Activated naive CD4-positive, alpha-beta T cell treated with anti-CD3 and anti-CD28 coated beads for 36 hours (primary cell): ENCODE measurements at regions of chr5 and their contacts with region 1.

Region 1: GRCh38 chr5:137498736-137499505 is at the start of gene SPOCK1:
- DNase-seq: peak; percentile 54
- H3K4me3 Mint-ChIP-seq: no peak within 1 kb of the TSS
- H3K27ac Mint-ChIP-seq: no peak within 1 kb of the TSS
- H3K4me1 Mint-ChIP-seq: peaks cover 2% of the 10 kb centered on the region
- H3K27me3 Mint-ChIP-seq: peaks cover 13% of the 10 kb centered on the region
- total RNA-seq, gene SPOCK1: 0.42 TPM in 1 of 2 experiments, not detected in the other

Region 2: DNA sequence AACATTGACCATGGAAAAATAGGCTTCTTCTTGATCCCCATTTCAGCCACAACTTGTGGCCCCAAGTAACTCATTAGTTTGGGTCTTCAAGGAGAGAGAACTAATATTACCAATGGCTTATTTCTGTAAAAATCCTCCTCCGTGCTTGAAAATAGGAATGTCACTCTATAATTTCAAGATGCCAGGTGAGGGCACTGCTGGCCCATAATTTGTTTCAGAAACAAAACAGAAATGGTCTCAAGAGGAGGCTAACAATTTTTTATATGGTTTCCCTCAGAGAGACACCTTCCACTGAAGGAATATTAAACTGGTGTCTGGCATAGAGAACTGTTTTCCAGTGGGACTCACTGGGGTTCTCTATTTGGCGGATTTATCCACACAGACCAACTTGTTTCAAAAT is 696.5 kb before region 1 on chr5:
- CTCF ChIA-PET with region 1: no interaction called
- intact Hi-C with region 1: loop called (anchors 10 kb)
- DNase-seq: no peak
- H3K4me3 Mint-ChIP-seq: no peak overlapping the region
- H3K27ac Mint-ChIP-seq: no peak overlapping the region
- H3K4me1 Mint-ChIP-seq: no peaks in the 10 kb centered on the region
- H3K27me3 Mint-ChIP-seq: no peaks in the 10 kb centered on the region

Region 3: GRCh38 chr5:137320056-137321045 is 178.6 kb before region 1 on chr5:
- CTCF ChIA-PET with region 1: interaction called, 8 read pairs
- intact Hi-C with region 1: loop called (anchors 1 kb)
- DNase-seq: peak; percentile 42
- H3K4me3 Mint-ChIP-seq: no peak overlapping the region
- H3K27ac Mint-ChIP-seq: no peak overlapping the region
- H3K4me1 Mint-ChIP-seq: no peaks in the 10 kb centered on the region
- H3K27me3 Mint-ChIP-seq: peaks cover 3% of the 10 kb centered on the region

Region 4: GRCh38 chr5:137344723-137345322 is 154.1 kb before region 1 on chr5:
- CTCF ChIA-PET with region 1: interaction called, 8 read pairs
- intact Hi-C with region 1: loop called (anchors 1 kb)
- DNase-seq: peak; percentile 28
- H3K4me3 Mint-ChIP-seq: no peak overlapping the region
- H3K27ac Mint-ChIP-seq: no peak overlapping the region
- H3K4me1 Mint-ChIP-seq: no peaks in the 10 kb centered on the region
- H3K27me3 Mint-ChIP-seq: peaks cover 3% of the 10 kb centered on the region